ENCODE measurements at regions of chr2 and their contacts with region 1.

Region 1: DNA sequence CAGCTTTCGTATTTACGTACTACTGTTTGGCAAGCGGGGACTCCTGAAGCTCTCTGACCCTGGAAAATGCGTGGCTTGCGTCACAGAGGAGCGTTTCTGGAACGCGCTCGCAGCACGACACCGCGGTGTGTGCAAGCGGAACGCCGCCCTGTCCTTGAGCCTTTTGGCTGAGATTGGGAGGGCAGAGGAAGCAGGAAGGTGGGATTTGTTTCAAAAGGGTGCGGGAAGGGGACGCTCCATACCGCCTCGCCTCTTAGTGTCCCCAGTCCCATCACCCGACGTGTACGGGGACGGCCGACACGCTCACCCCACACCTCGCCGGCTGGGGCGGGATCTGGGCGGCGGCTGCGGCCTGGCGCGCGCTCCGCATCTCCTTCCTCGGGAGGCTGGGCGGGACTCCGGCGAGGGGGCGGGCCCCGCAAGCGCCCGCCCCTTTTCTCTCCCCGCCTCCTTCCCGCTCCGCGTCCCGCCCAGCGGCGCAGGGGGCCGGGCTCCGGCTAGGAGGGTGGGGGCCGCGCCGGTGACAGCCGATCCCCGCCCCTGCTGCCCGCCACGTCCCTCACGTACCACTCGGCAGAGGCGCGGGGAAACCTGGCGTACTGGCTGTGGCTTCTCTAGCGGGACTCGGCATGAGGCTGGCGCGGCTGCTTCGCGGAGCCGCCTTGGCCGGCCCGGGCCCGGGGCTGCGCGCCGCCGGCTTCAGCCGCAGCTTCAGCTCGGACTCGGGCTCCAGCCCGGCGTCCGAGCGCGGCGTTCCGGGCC is at the start of gene PDK1:
- DNase-seq: peak; percentile 90
- H3K4me3 Mint-ChIP-seq: peak within 1 kb of the TSS; percentile 93
- H3K27ac Mint-ChIP-seq: peak within 1 kb of the TSS; percentile 94
- H3K4me1 Mint-ChIP-seq: peaks cover 53% of the 10 kb centered on the region
- H3K27me3 Mint-ChIP-seq: no peaks in the 10 kb centered on the region
- total RNA-seq, gene PDK1: 31.9 to 35.3 TPM

Region 2: DNA sequence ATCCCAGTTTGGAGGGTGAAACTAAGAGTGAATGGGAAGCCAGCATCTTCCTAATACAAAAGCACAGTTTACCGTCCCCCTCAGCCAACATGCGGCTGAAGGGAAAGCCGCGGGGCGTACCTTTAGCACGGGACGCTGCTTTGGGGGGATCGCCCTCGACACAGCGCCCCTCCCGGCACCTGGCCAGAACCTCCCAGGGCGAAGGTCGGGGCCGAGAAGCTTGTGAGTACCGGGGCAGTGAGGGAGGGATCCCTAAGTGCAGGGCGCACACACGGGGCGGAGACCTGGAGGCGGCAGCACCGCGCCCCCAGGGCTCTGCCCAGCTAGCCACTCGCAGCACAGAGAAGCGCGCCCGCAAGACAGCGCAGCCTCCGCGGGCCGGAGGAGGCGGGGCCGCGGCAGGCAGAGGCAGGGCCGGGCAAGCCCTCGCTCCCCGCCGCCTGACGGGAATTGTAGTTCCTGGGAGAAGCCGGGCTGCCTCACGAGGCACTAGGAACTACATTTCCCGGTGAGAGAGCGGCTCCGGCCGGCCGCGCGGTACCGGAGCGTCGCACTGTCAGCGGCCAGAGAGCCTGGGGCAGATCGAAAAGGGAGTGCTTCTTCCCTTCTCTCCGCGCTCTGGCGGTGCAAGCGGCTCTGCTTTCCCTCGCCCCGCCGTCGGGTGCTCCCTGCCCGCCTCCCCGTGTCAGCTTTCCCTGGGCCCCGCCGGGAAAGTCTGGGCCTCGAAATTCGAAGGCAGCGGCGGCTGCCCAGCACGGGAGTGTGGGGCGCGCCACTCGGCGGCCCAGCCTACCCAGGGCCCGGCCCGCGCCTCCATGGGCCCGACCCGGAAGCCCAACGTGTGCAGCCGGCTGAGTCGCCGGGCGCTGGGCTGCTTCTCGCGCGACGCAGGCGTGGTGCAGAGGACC is 1121.7 kb before region 1 on chr2 and contains the starts of genes DCAF17 and METTL8:
- CTCF ChIA-PET with region 1: no interaction called
- intact Hi-C with region 1: loop called (anchors 2 kb)
- DNase-seq: peak; percentile 96
- H3K4me3 Mint-ChIP-seq: peak within 1 kb of the TSS; percentile 86
- H3K27ac Mint-ChIP-seq: peak within 1 kb of the TSS; percentile 94
- H3K4me1 Mint-ChIP-seq: peaks cover 54% of the 10 kb centered on the region
- H3K27me3 Mint-ChIP-seq: no peaks in the 10 kb centered on the region
- total RNA-seq, gene DCAF17: 21.1 to 21.3 TPM
- total RNA-seq, gene METTL8: 32.9 to 34.5 TPM

Region 3: GRCh38 chr2:171893824-171894611 is 661.7 kb before region 1 on chr2 and contains the start of gene SLC25A12:
- CTCF ChIA-PET with region 1: no interaction called
- intact Hi-C with region 1: loop called (anchors 10 kb)
- DNase-seq: peak; percentile 78
- H3K4me3 Mint-ChIP-seq: peak within 1 kb of the TSS; percentile 100
- H3K27ac Mint-ChIP-seq: peak within 1 kb of the TSS; percentile 94
- H3K4me1 Mint-ChIP-seq: peaks cover 42% of the 10 kb centered on the region
- H3K27me3 Mint-ChIP-seq: no peaks in the 10 kb centered on the region
- total RNA-seq, gene SLC25A12: 15.0 to 17.4 TPM

Region 4: GRCh38 chr2:171999604-172000469 is 555.9 kb before region 1 on chr2 and contains the start of gene METAP1D:
- CTCF ChIA-PET with region 1: no interaction called
- intact Hi-C with region 1: loop called (anchors 5 kb)
- DNase-seq: peak; percentile 88
- H3K4me3 Mint-ChIP-seq: peak within 1 kb of the TSS; percentile 94
- H3K27ac Mint-ChIP-seq: peak within 1 kb of the TSS; percentile 89
- H3K4me1 Mint-ChIP-seq: peaks cover 25% of the 10 kb centered on the region
- H3K27me3 Mint-ChIP-seq: no peaks in the 10 kb centered on the region
- total RNA-seq, gene METAP1D: 2.5 to 3.4 TPM

Region 5: GRCh38 chr2:172442072-172442895 is 113.4 kb before region 1 on chr2:
- CTCF ChIA-PET with region 1: no interaction called
- intact Hi-C with region 1: loop called (anchors 2 kb)
- DNase-seq: peak; percentile 87
- H3K4me3 Mint-ChIP-seq: peak overlapping the region; percentile 58
- H3K27ac Mint-ChIP-seq: no peak overlapping the region
- H3K4me1 Mint-ChIP-seq: peaks cover 69% of the 10 kb centered on the region
- H3K27me3 Mint-ChIP-seq: no peaks in the 10 kb centered on the region

Region 6: DNA sequence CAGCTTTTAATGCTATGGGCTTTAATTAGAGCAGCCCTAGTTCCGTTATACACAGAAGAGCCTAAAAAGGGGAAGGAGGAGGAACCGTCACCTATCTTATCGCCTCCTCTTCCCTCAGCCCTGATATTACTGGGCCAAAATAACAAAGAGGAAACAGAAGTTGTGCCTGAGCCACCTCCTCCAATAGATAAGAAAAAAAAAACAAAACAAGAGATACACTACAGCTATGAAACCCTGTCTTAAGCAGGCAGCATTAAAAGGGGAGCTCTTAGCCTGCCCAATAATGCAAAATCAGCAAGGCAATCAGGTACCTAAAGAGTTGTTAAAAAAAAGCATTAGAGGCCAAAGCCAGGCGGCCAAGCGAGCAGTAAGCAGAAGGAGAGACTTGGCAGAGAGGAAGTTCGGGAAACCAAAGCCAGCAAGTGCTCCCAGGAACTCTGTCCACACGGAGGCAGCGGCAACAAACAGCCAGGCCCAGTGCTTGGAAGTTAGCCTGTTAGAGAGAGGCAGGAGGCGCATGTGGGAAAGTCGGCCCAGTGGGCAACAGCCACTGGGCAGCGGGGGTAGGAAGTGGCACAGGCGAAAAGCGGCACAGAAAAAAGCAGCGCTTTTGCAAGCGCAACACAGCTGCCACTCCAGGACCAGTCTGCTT is 41.6 kb before region 1 on chr2:
- CTCF ChIA-PET with region 1: no interaction called
- intact Hi-C with region 1: loop called (anchors 5 kb)
- DNase-seq: no peak
- H3K4me3 Mint-ChIP-seq: no peak overlapping the region
- H3K27ac Mint-ChIP-seq: no peak overlapping the region
- H3K4me1 Mint-ChIP-seq: peaks cover 16% of the 10 kb centered on the region
- H3K27me3 Mint-ChIP-seq: no peaks in the 10 kb centered on the region

Region 7: GRCh38 chr2:172693037-172693436 is 137.3 kb after region 1 on chr2:
- CTCF ChIA-PET with region 1: no interaction called
- intact Hi-C with region 1: loop called (anchors 1 kb)
- DNase-seq: peak; percentile 76
- H3K4me3 Mint-ChIP-seq: no peak overlapping the region
- H3K27ac Mint-ChIP-seq: no peak overlapping the region
- H3K4me1 Mint-ChIP-seq: peaks cover 34% of the 10 kb centered on the region
- H3K27me3 Mint-ChIP-seq: no peaks in the 10 kb centered on the region

Region 8: GRCh38 chr2:172845028-172845630 is 289.4 kb after region 1 on chr2:
- CTCF ChIA-PET with region 1: no interaction called
- intact Hi-C with region 1: no loop called
- DNase-seq: no peak
- H3K4me3 Mint-ChIP-seq: no peak overlapping the region
- H3K27ac Mint-ChIP-seq: no peak overlapping the region
- H3K4me1 Mint-ChIP-seq: no peaks in the 10 kb centered on the region
- H3K27me3 Mint-ChIP-seq: peaks cover 3% of the 10 kb centered on the region

Measured in activated naive CD4-positive, alpha-beta T cell treated with anti-CD3 and anti-CD28 coated beads for 36 hours (primary cell).